Posterior vena cava (tissue), 2 donors: ENCODE measurements at regions of chr17 and their contacts with region 1.

Region 1: GRCh38 chr17:40399185-40399584 is 18.5 kb downstream of the TOP2A start:
- DNase-seq: no peak

Region 2: DNA sequence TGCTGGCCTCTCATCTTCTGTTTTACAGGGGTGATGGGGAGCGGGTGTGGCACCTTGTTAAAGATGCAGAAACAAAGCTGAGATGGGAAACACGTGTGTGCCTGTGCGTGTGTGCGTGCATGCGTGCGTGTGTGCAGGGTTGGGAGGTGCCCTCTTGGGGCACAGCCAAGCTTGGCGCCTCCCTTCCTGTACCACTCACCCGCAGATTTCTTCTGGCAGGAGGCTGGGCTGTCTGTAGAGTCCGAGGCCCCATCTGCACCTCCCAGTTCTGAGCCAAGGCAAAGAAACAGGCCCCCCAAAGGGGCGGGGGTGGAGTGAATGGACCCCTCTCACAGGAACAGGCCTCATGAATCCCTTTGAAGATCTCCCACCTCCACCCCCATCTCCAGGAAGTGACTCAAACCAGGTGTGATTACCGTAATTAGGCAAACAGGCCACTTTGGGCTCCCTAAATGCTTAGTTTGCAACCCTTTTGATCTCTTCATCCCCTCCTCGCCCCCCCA is 81.4 kb after region 1 on chr17:
- intact Hi-C with region 1: loop called in 1 of 2 experiments (anchors 10 kb)
- DNase-seq: no peak

Region 3: DNA sequence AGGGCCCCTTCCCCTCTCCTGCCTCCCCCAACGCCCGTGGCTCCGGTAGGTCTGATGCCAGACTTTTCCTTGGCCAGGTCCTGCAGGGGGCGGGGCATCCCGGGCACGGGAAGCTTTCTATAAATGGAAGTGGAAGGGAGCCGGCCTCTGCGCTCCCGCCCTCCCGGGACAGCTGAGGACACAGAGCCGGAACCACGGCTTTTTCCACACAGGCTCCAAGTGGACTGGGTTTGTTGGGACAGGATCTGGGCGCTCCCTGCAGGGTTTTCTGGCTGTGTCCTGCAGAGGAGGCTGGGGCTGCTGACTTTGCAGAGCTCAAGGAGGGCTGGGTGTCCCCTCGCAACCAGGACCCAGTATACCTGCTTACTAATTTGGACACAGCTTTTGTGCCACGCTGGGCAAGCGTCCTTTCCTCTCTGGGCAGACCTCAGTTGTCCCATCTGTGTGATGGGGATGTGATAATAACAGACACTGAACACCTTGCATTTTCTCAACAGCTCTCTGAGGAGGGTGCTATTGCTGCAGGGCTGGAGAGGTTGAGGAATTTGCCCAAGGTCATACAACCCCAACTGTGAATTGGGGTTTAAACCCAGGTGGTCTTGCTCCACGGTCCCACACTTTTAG is 100.5 kb after region 1 on chr17:
- intact Hi-C with region 1: no loop called
- DNase-seq: peak; percentile 94

Region 4: GRCh38 chr17:40510328-40510648 is 111.1 kb after region 1 on chr17:
- intact Hi-C with region 1: no loop called
- DNase-seq: peak; percentile 64

Region 5: GRCh38 chr17:40536295-40537171 is 137.3 kb after region 1 on chr17:
- intact Hi-C with region 1: loop called in 1 of 2 experiments (anchors 10 kb)
- DNase-seq: peak; percentile 88

Region 6: GRCh38 chr17:40559954-40560591 is 160.9 kb after region 1 on chr17:
- intact Hi-C with region 1: loop called in 1 of 2 experiments (anchors 10 kb)
- DNase-seq: peak; percentile 96

Region 7: DNA sequence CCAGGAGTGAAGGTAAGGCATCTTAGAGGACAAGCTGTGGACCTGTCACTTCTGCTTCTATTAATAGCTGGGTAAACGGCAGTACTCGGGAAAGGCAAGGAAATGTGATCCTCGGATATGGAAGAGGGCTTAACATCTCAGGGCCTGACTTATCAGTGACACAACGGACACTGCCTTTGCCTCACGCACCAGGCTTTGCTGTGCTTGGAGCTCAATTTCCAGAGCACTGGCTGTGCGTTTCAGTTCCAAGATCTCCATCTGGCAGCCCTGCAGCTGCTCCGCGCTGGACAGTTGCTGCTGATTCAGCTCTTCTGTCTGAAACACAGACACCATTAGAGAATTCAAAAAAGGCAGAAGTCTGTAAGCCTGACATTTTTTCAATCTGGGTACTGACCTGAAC is 581.4 kb after region 1 on chr17:
- intact Hi-C with region 1: loop called in 1 of 2 experiments (anchors 5 kb)
- DNase-seq: peak; percentile 82